Caco-2 (cell line): ENCODE measurements at regions of chr11 and their contacts with region 1.

Region 1: GRCh38 chr11:67428052-67428914 is at the start of gene RPS6KB2:
- DNase-seq: peak; percentile 100
- H3K4me3 ChIP-seq: peak within 1 kb of the TSS; percentile 74
- H3K4me3 Mint-ChIP-seq: peak within 1 kb of the TSS; percentile 93
- H3K27ac Mint-ChIP-seq: peak within 1 kb of the TSS; percentile 96
- H3K4me1 ChIP-seq: peaks cover 4% of the 10 kb centered on the region; the same call in 1 of the 2 replicates
- H3K4me1 Mint-ChIP-seq: no peaks in the 10 kb centered on the region
- H3K27me3 ChIP-seq: no peaks in the 10 kb centered on the region
- H3K27me3 Mint-ChIP-seq: no peaks in the 10 kb centered on the region
- CTCF ChIP-seq: no peak
- total RNA-seq, gene RPS6KB2: 109 and 116 TPM in 2 replicates

Region 2: DNA sequence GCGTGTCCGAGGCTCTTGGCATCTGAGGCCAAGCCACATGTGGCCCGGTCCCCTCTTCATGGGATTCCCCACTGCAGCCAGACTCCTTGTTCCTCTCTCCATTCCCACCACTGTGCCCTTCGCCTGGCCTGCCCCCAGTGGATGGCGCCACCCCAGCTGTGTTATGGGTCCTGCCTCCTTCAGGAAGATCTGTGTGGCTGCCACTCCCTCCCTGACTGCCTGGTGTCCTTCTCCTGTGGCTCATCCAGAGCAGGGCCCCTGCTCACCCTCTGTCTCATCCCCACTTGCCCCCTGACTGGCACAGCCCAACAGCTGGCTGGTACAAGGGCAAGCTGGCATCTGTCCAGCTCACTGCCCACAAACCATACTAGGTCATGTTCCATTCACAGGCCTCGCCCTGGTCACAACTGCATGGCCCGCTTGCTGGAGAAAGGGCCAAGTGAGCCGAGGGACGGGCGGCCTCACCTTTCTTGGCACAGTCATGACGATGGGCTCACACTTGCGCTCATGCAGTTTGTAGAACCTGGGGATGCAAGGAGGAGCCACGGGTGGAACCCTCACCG is 11.1 kb after region 1 on chr11:
- CTCF ChIA-PET with region 1: interaction called, 3 read pairs
- POLR2A ChIA-PET with region 1: interaction called, 9 read pairs
- intact Hi-C with region 1: loop called (anchors 1 kb)
- DNase-seq: peak in 1 of 2 experiments; percentile 68
- H3K4me3 ChIP-seq: no peak overlapping the region
- H3K4me3 Mint-ChIP-seq: peak overlapping the region; percentile 2
- H3K27ac Mint-ChIP-seq: peak overlapping the region; percentile 9
- H3K4me1 ChIP-seq: peaks cover 14% of the 10 kb centered on the region
- H3K4me1 Mint-ChIP-seq: no peaks in the 10 kb centered on the region
- H3K27me3 ChIP-seq: no peaks in the 10 kb centered on the region
- H3K27me3 Mint-ChIP-seq: no peaks in the 10 kb centered on the region
- CTCF ChIP-seq: peak in 1 of 2 experiments; percentile 38